Activated T-helper 2 cell treated with anti-CD3 and anti-CD28 coated beads, Interferon-gamma antibody, Interleukin-2, Interleukin-4, amounts not matched to agents 10 μg/mL and 5 μg/mL and 100 μg/mL, durations not matched to agents 14 hours and 24 hours and 36 hours (primary cell): ENCODE measurements at regions of chr5 and their contacts with region 1.

Region 1: DNA sequence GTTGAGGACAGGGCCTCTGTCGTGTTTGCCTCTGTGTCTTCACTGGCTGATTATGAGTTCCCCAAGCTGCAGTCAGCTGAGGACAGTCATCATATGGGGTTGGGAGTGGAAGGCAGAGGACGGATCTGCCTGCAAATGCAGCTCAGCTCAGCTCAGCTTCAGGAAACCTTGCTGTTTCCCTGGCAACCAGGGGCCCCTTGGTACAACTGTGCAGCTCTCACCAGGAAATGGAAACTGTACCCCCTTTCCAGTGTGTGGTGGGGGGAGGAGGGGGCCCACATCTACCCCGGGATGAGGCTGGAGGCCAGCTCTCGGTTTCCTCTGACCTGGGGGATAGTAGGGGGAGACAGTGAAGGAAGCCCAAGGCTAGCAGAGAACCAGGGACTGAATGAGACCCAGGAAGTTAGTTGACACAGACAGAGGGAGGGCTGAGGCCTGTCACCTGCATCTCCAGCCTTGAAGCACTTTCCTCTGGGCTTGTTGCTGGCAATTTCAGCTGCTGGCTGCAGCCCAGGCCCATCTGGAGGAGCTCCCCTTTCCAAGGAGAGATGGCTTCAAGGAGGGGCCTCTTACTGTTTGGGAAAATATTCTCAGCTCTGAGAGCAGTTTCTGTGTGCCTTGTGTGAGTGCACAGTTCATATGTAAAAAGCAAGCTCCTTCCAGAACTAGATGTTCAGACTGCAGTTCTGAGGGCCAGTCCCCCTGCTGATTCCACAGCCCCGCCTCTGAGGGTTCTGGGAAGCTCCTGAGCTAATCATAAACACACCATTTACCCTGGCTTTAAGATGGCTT is 6.9 kb downstream of the ANXA6 start:
- DNase-seq: peak; percentile 69
- H3K4me3 Mint-ChIP-seq: peak overlapping the region; percentile 59
- H3K27ac Mint-ChIP-seq: peak overlapping the region; percentile 86
- H3K4me1 Mint-ChIP-seq: peaks cover 78% of the 10 kb centered on the region
- H3K27me3 Mint-ChIP-seq: no peaks in the 10 kb centered on the region

Region 2: GRCh38 chr5:150789943-150790611 is 360.6 kb before region 1 on chr5:
- intact Hi-C with region 1: loop called (anchors 2 kb)
- DNase-seq: peak; percentile 49
- H3K4me3 Mint-ChIP-seq: peak overlapping the region; percentile 49
- H3K27ac Mint-ChIP-seq: peak overlapping the region; percentile 87
- H3K4me1 Mint-ChIP-seq: peaks cover 44% of the 10 kb centered on the region
- H3K27me3 Mint-ChIP-seq: no peaks in the 10 kb centered on the region

Region 3: DNA sequence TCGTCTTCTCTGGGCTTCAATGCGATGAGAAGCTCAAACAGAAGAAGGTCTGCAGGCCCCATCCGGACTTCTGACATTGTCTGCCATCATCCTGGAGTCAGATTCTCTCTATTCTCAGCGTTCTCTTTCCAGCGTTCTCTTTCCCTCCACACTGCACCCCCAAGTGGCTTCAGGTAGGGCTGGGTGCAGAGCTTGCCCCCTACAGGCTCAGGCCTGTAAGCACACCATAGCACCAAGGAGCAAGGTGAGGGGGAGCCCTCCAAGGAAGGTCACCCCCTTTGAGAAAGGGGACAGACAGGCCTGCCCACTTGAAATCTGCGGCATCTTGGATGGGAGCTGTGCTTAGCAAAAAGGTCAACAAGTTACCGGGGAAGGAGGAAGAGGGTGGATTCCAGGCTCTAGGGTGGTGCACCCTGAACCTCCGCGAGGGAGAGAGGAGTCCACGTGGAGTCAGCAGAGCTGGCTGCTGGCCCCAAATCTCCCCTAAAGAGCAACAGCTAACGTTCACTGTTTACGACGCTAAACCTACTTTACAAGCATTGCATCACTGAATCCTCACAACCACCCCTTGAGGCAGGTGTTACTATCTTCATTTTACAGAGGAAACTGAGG is 102.7 kb before region 1 on chr5:
- intact Hi-C with region 1: no loop called
- DNase-seq: no peak
- H3K4me3 Mint-ChIP-seq: no peak overlapping the region
- H3K27ac Mint-ChIP-seq: peak overlapping the region; percentile 17
- H3K4me1 Mint-ChIP-seq: peaks cover 11% of the 10 kb centered on the region
- H3K27me3 Mint-ChIP-seq: no peaks in the 10 kb centered on the region

Region 4: GRCh38 chr5:151068433-151069197 is 82.1 kb before region 1 on chr5:
- intact Hi-C with region 1: loop called (anchors 2 kb)
- DNase-seq: no peak
- H3K4me3 Mint-ChIP-seq: peak overlapping the region; percentile 57
- H3K27ac Mint-ChIP-seq: peak overlapping the region; percentile 89
- H3K4me1 Mint-ChIP-seq: peaks cover 87% of the 10 kb centered on the region
- H3K27me3 Mint-ChIP-seq: no peaks in the 10 kb centered on the region

Region 5: GRCh38 chr5:151093476-151093889 is 57.2 kb before region 1 on chr5:
- intact Hi-C with region 1: loop called (anchors 1 kb)
- DNase-seq: no peak
- H3K4me3 Mint-ChIP-seq: peak overlapping the region; percentile 71
- H3K27ac Mint-ChIP-seq: peak overlapping the region; percentile 94
- H3K4me1 Mint-ChIP-seq: peaks cover 67% of the 10 kb centered on the region
- H3K27me3 Mint-ChIP-seq: no peaks in the 10 kb centered on the region

Region 6: GRCh38 chr5:151126199-151126645 is 24.4 kb before region 1 on chr5:
- intact Hi-C with region 1: loop called (anchors 2 kb)
- DNase-seq: peak; percentile 47
- H3K4me3 Mint-ChIP-seq: no peak overlapping the region
- H3K27ac Mint-ChIP-seq: peak overlapping the region; percentile 62
- H3K4me1 Mint-ChIP-seq: peaks cover 41% of the 10 kb centered on the region
- H3K27me3 Mint-ChIP-seq: no peaks in the 10 kb centered on the region

Region 7: DNA sequence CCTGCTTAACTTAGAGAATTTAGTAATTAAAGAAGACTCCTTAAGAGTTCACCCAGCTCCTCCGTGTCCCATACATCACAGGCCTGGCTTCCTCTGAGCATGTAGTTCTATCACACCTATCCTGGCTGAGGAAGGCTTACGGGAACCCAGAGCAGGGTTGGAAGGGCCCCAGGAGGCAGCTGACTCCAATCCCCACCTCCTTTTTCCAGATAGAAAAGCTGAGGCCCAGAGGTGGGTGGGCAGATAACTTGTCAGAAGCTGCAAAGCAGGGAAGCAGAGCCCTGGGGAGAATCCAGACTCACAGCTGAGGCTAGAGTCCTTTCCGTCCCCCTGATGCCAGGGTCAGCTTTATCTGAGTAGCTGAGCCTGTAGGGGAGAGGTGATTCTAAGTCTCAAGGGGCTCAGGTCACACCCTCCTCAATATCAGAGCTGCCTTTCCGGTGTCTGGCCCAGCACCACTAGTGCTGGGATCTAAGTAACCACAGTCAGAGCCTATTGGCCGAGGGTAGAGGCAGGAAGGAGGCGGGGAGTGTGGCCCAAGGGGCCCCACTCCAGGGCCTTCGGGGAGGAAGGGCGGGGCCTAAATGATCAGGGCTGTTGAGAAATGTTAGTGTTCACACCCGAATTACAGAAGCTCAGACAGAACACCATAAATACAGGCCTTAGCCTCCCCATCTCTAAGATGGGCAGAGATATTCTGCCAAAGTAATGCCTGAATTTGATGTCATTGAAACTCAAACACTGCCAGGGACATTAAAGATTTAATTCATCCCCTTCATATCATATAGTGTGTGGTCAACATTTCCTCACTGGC is 63.3 kb after region 1 on chr5:
- intact Hi-C with region 1: loop called (anchors 1 kb)
- DNase-seq: peak; percentile 84
- H3K4me3 Mint-ChIP-seq: peak overlapping the region; percentile 79
- H3K27ac Mint-ChIP-seq: peak overlapping the region; percentile 97
- H3K4me1 Mint-ChIP-seq: peaks cover 75% of the 10 kb centered on the region
- H3K27me3 Mint-ChIP-seq: no peaks in the 10 kb centered on the region